ENCODE measurements at regions of chr3 and their contacts with region 1.

Region 1: DNA sequence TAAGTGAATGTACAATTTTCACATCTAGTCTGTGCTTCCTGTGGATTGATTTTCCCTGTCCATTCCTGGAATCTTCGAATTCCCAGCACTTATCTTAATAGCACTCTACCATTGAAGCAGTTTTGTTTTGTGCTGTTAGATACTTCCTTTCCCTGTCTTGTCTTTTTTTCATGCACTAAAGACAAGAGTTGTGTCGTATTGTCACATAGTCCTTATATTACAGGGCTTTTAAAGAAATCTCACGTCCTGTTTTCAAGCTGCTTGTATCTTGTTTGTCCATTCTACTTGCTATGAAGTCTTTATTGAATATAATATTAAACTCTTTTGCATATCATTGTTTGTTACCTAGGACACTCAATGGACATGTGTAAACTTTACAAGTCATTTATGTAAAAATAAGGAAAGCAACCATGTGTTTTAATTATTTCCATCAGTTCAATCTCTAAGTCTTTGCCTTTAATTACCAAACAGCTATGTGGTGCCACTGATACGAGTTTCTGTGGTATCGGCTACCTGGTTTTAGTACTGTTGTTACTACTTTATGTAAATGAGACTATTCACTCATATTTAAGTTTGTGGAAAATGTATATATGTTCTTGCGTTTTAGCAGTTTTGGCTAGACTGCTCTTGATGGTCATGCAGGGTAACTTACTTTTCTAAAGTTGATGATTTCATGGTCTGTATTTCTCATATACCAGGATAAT is 10.3 kb downstream of the PIK3CA start:
- DNase-seq: no peak
- ATAC-seq: peak; percentile 92
- H3K4me3 ChIP-seq: no peak overlapping the region
- H3K27ac ChIP-seq: no peak overlapping the region
- H3K4me1 ChIP-seq: peaks cover 8% of the 10 kb centered on the region; the same call in 1 of the 2 replicates
- H3K27me3 ChIP-seq: no peaks in the 10 kb centered on the region
- CTCF ChIP-seq: no peak
- EP300 ChIP-seq: no peak
- POLR2A ChIP-seq: no peak
- RAD21 ChIP-seq: no peak

Region 2: GRCh38 chr3:179174316-179174715 is 15.8 kb after region 1 on chr3:
- CTCF ChIA-PET with region 1: interaction called, 4 read pairs
- POLR2A ChIA-PET with region 1: no interaction called
- RAD21 ChIA-PET with region 1: no interaction called
- SMC1A ChIA-PET with region 1: interaction called, 14 read pairs
- in situ Hi-C with region 1: no loop called
- intact Hi-C with region 1: no loop called
- DNase-seq: no peak
- ATAC-seq: peak; percentile 91
- H3K4me3 ChIP-seq: no peak overlapping the region
- H3K27ac ChIP-seq: no peak overlapping the region; the same call in 1 of the 2 replicates
- H3K4me1 ChIP-seq: peaks cover 6% of the 10 kb centered on the region; the same call in 1 of the 2 replicates
- H3K27me3 ChIP-seq: no peaks in the 10 kb centered on the region
- CTCF ChIP-seq: no peak
- EP300 ChIP-seq: no peak
- POLR2A ChIP-seq: no peak
- RAD21 ChIP-seq: no peak

Region 3: DNA sequence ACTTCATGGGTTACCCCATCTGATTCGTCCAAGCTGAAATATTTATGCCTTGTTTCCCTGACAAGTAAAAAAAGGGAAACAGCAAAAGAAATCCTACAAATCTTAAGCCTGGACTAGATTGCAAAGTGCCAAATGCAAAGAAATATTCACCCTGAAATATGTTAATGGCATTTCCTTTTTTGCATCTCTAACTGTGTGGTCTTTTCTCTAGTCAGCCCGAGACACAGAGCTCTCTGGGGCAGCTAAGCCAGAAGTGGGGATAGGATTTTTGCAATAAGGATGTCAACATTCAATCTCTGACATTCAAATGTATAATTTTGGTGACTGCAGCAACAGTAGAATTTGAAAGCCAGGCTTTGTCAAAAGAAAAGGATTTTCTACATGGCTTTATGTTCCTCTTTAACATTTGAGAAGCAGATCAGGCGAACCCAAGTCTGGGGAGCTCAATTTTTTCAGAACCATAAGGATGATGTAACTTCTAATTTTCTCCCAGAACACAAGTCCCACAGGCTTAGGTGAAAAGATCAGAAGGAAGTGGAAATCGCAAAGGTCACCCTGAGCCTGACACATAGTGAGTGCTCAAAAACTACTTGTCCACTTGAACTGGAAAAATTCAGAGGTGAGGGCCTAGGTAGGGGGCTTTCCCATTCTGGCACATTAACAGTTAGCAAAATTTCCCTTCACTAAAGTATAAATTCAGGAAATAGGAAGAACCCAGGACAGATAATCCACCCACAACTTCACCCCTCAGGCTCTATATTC is 120.6 kb after region 1 on chr3:
- CTCF ChIA-PET with region 1: no interaction called
- POLR2A ChIA-PET with region 1: no interaction called
- RAD21 ChIA-PET with region 1: no interaction called
- SMC1A ChIA-PET with region 1: no interaction called
- in situ Hi-C with region 1: no loop called
- intact Hi-C with region 1: no loop called
- DNase-seq: no peak
- ATAC-seq: no peak
- H3K4me3 ChIP-seq: no peak overlapping the region
- H3K27ac ChIP-seq: no peak overlapping the region
- H3K4me1 ChIP-seq: no peaks in the 10 kb centered on the region
- H3K27me3 ChIP-seq: no peaks in the 10 kb centered on the region
- CTCF ChIP-seq: no peak
- EP300 ChIP-seq: no peak
- POLR2A ChIP-seq: no peak
- RAD21 ChIP-seq: no peak

Region 4: GRCh38 chr3:179304605-179305004 is 146.1 kb after region 1 on chr3:
- CTCF ChIA-PET with region 1: no interaction called
- POLR2A ChIA-PET with region 1: no interaction called
- RAD21 ChIA-PET with region 1: no interaction called
- SMC1A ChIA-PET with region 1: no interaction called
- in situ Hi-C with region 1: no loop called
- intact Hi-C with region 1: no loop called
- DNase-seq: no peak
- ATAC-seq: peak; percentile 34
- H3K4me3 ChIP-seq: no peak overlapping the region
- H3K27ac ChIP-seq: no peak overlapping the region
- H3K4me1 ChIP-seq: peaks cover 4% of the 10 kb centered on the region
- H3K27me3 ChIP-seq: no peaks in the 10 kb centered on the region
- CTCF ChIP-seq: no peak
- EP300 ChIP-seq: no peak
- POLR2A ChIP-seq: no peak
- RAD21 ChIP-seq: no peak

Measured in GM12878 (cell line).